K562 (cell line): ENCODE measurements at regions of chr22 and their contacts with region 1.

Region 1: GRCh38 chr22:22520020-22520656 is at the start of gene ZNF280A:
- DNase-seq: peak; percentile 98 to 99 (median 98)
- ATAC-seq: peak; percentile 82
- H3K4me3 ChIP-seq: peak within 1 kb of the TSS; percentile 41
- H3K27ac ChIP-seq: peak within 1 kb of the TSS; percentile 61
- H3K4me1 ChIP-seq: peaks cover 27 to 30% of the 10 kb centered on the region in 2 experiments
- H3K27me3 ChIP-seq: no peaks in the 10 kb centered on the region
- CTCF ChIP-seq: no peak
- EP300 ChIP-seq: no peak
- POLR2A ChIP-seq: no peak
- RAD21 ChIP-seq: no peak
- polyA plus RNA-seq, gene ZNF280A: 28.6 to 38.6 TPM

Region 2: DNA sequence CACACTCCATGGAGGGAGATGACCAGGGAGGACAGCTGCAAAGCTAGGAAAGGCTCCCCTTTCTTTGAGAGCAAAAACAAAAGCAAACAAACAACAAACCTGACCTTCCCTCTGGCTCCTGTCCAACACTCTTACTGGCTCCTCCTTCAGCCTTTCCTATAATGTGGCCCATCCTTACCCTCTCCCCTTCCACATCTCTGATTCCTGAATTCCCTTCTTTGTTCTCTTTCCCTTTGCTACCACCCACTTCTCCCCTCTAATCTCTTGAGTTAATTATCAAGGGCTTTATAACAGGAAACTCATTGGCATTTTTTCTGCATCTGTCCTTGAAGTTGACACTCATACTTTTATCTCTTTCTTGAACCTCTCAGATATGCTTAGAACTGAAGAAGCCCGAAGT is 67.9 kb before region 1 on chr22:
- CTCF ChIA-PET with region 1: no interaction called
- POLR2A ChIA-PET with region 1: no interaction called
- in situ Hi-C with region 1: no loop called
- intact Hi-C with region 1: no loop called
- DNase-seq: no peak
- ATAC-seq: no peak
- H3K4me3 ChIP-seq: no peak overlapping the region
- H3K27ac ChIP-seq: no peak overlapping the region
- H3K4me1 ChIP-seq: no peaks in the 10 kb centered on the region
- H3K27me3 ChIP-seq: peaks cover 16 to 26% of the 10 kb centered on the region in 2 experiments; a peak in 4 of 5 replicates
- CTCF ChIP-seq: no peak
- EP300 ChIP-seq: no peak
- POLR2A ChIP-seq: no peak
- RAD21 ChIP-seq: no peak

Region 3: DNA sequence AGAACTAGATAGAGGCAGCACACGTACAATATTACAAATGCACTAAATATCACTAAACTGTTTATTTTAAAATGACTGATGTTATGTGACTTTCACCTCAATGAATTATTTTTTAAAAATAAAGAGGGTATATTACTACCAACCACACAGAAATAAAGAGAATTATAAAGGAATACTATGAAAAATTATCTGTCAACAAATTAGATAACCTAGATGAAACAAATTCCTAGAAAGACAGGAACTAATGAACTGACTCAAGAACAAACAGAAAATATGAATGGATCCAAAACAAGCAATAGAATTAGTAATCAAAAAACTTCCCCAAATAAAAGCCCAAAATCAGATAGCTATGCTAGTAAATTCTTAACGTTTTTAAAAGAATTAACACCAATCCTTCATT is 21.9 kb before region 1 on chr22:
- CTCF ChIA-PET with region 1: no interaction called
- POLR2A ChIA-PET with region 1: interaction called, 289 read pairs
- in situ Hi-C with region 1: no loop called
- intact Hi-C with region 1: no loop called
- DNase-seq: no peak
- ATAC-seq: no peak
- H3K4me3 ChIP-seq: no peak overlapping the region
- H3K27ac ChIP-seq: no peak overlapping the region
- H3K4me1 ChIP-seq: no peaks in the 10 kb centered on the region
- H3K27me3 ChIP-seq: no peaks in the 10 kb centered on the region
- CTCF ChIP-seq: no peak
- EP300 ChIP-seq: no peak
- POLR2A ChIP-seq: no peak
- RAD21 ChIP-seq: no peak

Region 4: GRCh38 chr22:22538226-22538989 is 18.3 kb after region 1 on chr22:
- CTCF ChIA-PET with region 1: no interaction called
- POLR2A ChIA-PET with region 1: interaction called, 179 read pairs
- in situ Hi-C with region 1: no loop called
- intact Hi-C with region 1: no loop called
- DNase-seq: no peak
- ATAC-seq: peak; percentile 16
- H3K4me3 ChIP-seq: no peak overlapping the region
- H3K27ac ChIP-seq: no peak overlapping the region
- H3K4me1 ChIP-seq: no peaks in the 10 kb centered on the region; a peak in 2 of 5 replicates
- H3K27me3 ChIP-seq: no peaks in the 10 kb centered on the region
- CTCF ChIP-seq: no peak
- EP300 ChIP-seq: no peak
- POLR2A ChIP-seq: no peak
- RAD21 ChIP-seq: no peak

Region 5: DNA sequence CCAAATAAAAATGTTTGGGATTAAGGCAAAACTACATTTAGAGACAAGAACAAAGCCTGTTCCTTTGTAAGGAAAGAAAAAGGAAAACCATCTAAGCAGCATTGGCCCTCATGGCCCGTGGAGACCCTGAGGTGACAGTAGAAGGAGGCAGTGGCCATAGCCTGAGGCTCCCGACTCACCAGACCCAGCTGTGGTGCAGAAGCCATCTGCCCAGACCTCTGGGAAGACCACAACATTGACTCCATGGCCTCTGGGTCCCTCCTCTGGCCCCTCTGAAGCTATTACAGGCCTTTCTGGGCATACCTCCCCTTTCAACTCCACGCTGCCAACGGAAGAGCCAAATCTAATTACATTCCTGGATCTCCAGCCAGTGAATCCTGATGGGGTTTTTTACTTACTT is 32.5 kb after region 1 on chr22:
- CTCF ChIA-PET with region 1: no interaction called
- POLR2A ChIA-PET with region 1: interaction called, 179 read pairs
- in situ Hi-C with region 1: no loop called
- intact Hi-C with region 1: no loop called
- DNase-seq: peak; percentile 84 to 87 (median 86)
- ATAC-seq: peak; percentile 21
- H3K4me3 ChIP-seq: no peak overlapping the region
- H3K27ac ChIP-seq: peak overlapping the region; percentile 2; the same call in 2 of the 3 replicates
- H3K4me1 ChIP-seq: peaks cover 52 to 63% of the 10 kb centered on the region in 2 experiments
- H3K27me3 ChIP-seq: no peaks in the 10 kb centered on the region
- CTCF ChIP-seq: no peak
- EP300 ChIP-seq: no peak
- POLR2A ChIP-seq: no peak
- RAD21 ChIP-seq: no peak

Region 6: DNA sequence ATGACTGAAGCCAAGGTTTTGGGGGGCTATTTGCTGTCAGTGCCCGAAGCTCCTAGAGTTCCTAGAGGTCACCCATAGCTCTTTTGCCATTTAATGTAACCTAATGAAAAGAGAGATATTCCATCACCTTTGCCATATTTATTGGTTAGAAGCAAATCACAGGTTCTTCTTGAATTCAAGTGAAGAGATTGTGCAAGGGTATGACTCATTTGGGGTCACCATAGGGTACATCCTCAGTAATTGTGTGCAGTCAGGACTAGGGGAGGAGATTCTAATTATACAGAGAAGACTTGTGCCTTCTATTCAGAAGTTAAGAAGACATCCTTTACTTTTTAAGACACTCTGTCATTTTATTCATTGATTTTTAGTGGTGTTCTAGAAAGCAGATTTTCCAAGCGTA is 45.8 kb after region 1 on chr22:
- CTCF ChIA-PET with region 1: interaction called, 3 read pairs
- POLR2A ChIA-PET with region 1: interaction called, 20 read pairs
- in situ Hi-C with region 1: no loop called
- intact Hi-C with region 1: no loop called
- DNase-seq: no peak
- ATAC-seq: no peak
- H3K4me3 ChIP-seq: no peak overlapping the region
- H3K27ac ChIP-seq: no peak overlapping the region
- H3K4me1 ChIP-seq: no peaks in the 10 kb centered on the region; a peak in 1 of 5 replicates
- H3K27me3 ChIP-seq: peaks cover 45 to 49% of the 10 kb centered on the region in 2 experiments
- CTCF ChIP-seq: no peak
- EP300 ChIP-seq: no peak
- POLR2A ChIP-seq: no peak
- RAD21 ChIP-seq: no peak

Region 7: DNA sequence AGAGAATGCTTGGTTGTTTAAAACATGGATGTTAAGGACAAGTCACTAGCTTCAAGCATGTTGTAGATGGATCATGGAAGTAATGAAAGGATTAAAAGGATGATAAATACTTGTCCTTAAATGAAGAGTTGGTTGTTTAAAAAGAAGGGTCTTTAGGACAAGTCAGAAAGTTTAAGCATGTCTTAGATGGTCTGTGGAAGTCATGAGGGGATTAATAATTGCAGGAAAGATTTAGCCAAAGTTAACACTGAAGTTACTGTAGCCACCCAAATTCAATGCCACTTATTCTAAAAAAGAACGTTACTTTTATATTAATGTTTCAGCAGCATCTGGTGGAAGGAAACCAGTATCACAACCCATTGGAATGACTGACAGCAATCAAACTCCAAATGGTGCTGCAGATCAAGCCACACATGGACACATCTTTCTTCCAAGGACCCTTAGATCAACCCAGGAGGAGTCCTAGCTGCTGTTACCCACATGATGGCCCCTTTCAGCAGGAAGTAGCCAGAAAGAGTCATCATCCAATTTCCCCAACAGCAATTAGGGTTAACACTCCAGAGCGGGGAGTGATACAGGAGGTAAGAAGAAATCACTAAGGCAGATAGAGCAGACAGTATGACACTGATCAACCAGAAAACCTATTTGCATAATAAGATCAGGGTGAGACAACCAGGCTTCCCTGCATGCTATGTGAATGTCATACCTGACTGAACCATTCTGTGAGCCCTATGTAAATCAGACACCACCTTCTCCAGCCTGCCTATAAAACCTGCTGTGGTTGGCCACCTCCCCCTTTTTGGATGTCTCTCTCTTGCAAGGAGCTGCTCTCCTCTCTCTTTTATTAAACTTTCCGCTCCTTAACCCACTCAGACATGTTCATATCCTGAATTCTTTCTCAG is 461.8 kb after region 1 on chr22:
- CTCF ChIA-PET with region 1: no interaction called
- POLR2A ChIA-PET with region 1: no interaction called
- in situ Hi-C with region 1: no loop called
- intact Hi-C with region 1: no loop called
- DNase-seq: no peak
- ATAC-seq: peak; percentile 19
- H3K4me3 ChIP-seq: no peak overlapping the region
- H3K27ac ChIP-seq: no peak overlapping the region
- H3K4me1 ChIP-seq: no peaks in the 10 kb centered on the region
- H3K27me3 ChIP-seq: peaks cover 7 to 11% of the 10 kb centered on the region in 2 experiments; a peak in 3 of 5 replicates
- CTCF ChIP-seq: no peak
- EP300 ChIP-seq: no peak
- POLR2A ChIP-seq: no peak
- RAD21 ChIP-seq: no peak